CD4-positive, alpha-beta T cell (primary cell): ENCODE measurements at regions of chr1 and their contacts with region 1.

Region 1: GRCh38 chr1:84506002-84506728 is at the starts of genes GNG5 and SPATA1:
- DNase-seq: peak; percentile 94 to 99 (median 97)
- ATAC-seq: peak; percentile 92
- H3K4me3 ChIP-seq: peak within 1 kb of the TSS; percentile 95
- H3K4me3 Mint-ChIP-seq: peak within 1 kb of the TSS; percentile 96
- H3K27ac ChIP-seq: peak within 1 kb of the TSS; percentile 75 to 91
- H3K27ac Mint-ChIP-seq: peak within 1 kb of the TSS; percentile 88
- H3K4me1 ChIP-seq: peaks cover 21% of the 10 kb centered on the region
- H3K4me1 Mint-ChIP-seq: peaks cover 62% of the 10 kb centered on the region
- H3K27me3 ChIP-seq: no peaks in the 10 kb centered on the region
- H3K27me3 Mint-ChIP-seq: no peaks in the 10 kb centered on the region
- CTCF ChIP-seq: no peak
- total RNA-seq, gene GNG5: 23.6 to 24.6 TPM
- total RNA-seq, gene SPATA1: 0.11 to 0.61 TPM

Region 2: GRCh38 chr1:84077476-84078107 is 428.6 kb before region 1 on chr1:
- CTCF ChIA-PET with region 1: no interaction called
- POLR2A ChIA-PET with region 1: no interaction called
- intact Hi-C with region 1: loop called in 1 of 2 experiments (anchors 2 kb)
- DNase-seq: peak; percentile 32 to 86 (median 60)
- ATAC-seq: peak; percentile 88
- H3K4me3 ChIP-seq: peak overlapping the region; percentile 74
- H3K4me3 Mint-ChIP-seq: peak overlapping the region; percentile 92
- H3K27ac ChIP-seq: no peak overlapping the region
- H3K27ac Mint-ChIP-seq: peak overlapping the region; percentile 63
- H3K4me1 ChIP-seq: peaks cover 11% of the 10 kb centered on the region
- H3K4me1 Mint-ChIP-seq: peaks cover 16% of the 10 kb centered on the region
- H3K27me3 ChIP-seq: no peaks in the 10 kb centered on the region
- H3K27me3 Mint-ChIP-seq: no peaks in the 10 kb centered on the region
- CTCF ChIP-seq: no peak

Region 3: DNA sequence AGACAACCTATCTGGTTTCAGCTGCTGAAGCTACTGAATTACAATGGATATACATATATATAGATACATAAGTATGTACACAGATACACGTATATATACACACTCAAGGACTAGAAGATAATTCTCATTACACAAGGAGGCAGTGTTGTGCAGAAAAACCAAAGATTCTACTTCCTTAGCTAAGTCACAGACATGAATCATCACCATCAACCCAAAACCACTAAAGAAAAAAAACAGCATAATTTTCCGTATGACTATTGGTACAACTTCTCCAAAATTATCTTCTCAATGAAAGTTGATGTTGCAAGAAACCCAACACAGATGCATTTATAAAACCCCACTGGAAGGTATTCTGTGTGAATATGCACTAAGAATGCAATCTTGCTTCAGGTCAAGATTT is 63.9 kb before region 1 on chr1:
- CTCF ChIA-PET with region 1: interaction called, 8 read pairs
- POLR2A ChIA-PET with region 1: interaction called, 7 read pairs
- intact Hi-C with region 1: loop called (anchors 2 to 5 kb)
- DNase-seq: peak in 4 of 14 experiments; percentile 7 to 89 (median 86)
- ATAC-seq: peak; percentile 98
- H3K4me3 ChIP-seq: no peak overlapping the region
- H3K4me3 Mint-ChIP-seq: peak overlapping the region; percentile 5
- H3K27ac ChIP-seq: no peak overlapping the region
- H3K27ac Mint-ChIP-seq: peak overlapping the region; percentile 1
- H3K4me1 ChIP-seq: peaks cover 17% of the 10 kb centered on the region
- H3K4me1 Mint-ChIP-seq: peaks cover 11% of the 10 kb centered on the region
- H3K27me3 ChIP-seq: no peaks in the 10 kb centered on the region
- H3K27me3 Mint-ChIP-seq: peaks cover 15% of the 10 kb centered on the region
- CTCF ChIP-seq: peak; percentile 69

Region 4: GRCh38 chr1:84478876-84479868 is 27.0 kb before region 1 on chr1 and contains the start of gene RPF1:
- CTCF ChIA-PET with region 1: interaction called, 7 read pairs
- POLR2A ChIA-PET with region 1: interaction called, 61 read pairs
- intact Hi-C with region 1: loop called (anchors 1 to 2 kb)
- DNase-seq: peak; percentile 58 to 91 (median 74)
- ATAC-seq: peak; percentile 93
- H3K4me3 ChIP-seq: peak within 1 kb of the TSS; percentile 84
- H3K4me3 Mint-ChIP-seq: peak within 1 kb of the TSS; percentile 97
- H3K27ac ChIP-seq: peak within 1 kb of the TSS; percentile 82 to 85
- H3K27ac Mint-ChIP-seq: peak within 1 kb of the TSS; percentile 95
- H3K4me1 ChIP-seq: peaks cover 13% of the 10 kb centered on the region
- H3K4me1 Mint-ChIP-seq: peaks cover 53% of the 10 kb centered on the region
- H3K27me3 ChIP-seq: peaks cover 3 to 12% of the 10 kb centered on the region in 2 experiments
- H3K27me3 Mint-ChIP-seq: peaks cover 33% of the 10 kb centered on the region
- CTCF ChIP-seq: no peak
- total RNA-seq, gene RPF1: 67.6 to 69.4 TPM

Region 5: DNA sequence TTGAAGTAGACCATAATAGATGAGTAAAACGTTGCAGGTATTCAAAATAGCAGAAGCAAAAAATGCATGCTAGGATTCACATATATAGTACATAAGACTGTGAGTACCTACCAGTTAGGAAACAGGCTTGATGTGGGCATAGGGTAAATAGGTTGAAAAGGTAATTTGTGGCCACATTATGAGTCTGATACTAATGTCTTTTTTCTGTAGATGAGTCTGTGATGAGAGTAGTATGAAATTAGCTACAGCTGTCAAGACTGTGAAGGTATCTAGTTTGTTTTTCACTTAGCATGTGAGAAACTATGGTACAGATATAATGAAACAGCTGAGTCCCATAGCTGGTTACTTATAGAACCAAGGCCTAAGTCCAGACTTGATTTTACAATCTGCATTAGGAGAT is 12.4 kb before region 1 on chr1:
- CTCF ChIA-PET with region 1: no interaction called
- POLR2A ChIA-PET with region 1: interaction called, 14 read pairs
- intact Hi-C with region 1: no loop called
- DNase-seq: no peak
- ATAC-seq: no peak
- H3K4me3 ChIP-seq: no peak overlapping the region
- H3K4me3 Mint-ChIP-seq: no peak overlapping the region
- H3K27ac ChIP-seq: no peak overlapping the region
- H3K27ac Mint-ChIP-seq: peak overlapping the region; percentile 31
- H3K4me1 ChIP-seq: no peaks in the 10 kb centered on the region
- H3K4me1 Mint-ChIP-seq: peaks cover 25% of the 10 kb centered on the region
- H3K27me3 ChIP-seq: no peaks in the 10 kb centered on the region
- H3K27me3 Mint-ChIP-seq: no peaks in the 10 kb centered on the region
- CTCF ChIP-seq: no peak

Region 6: DNA sequence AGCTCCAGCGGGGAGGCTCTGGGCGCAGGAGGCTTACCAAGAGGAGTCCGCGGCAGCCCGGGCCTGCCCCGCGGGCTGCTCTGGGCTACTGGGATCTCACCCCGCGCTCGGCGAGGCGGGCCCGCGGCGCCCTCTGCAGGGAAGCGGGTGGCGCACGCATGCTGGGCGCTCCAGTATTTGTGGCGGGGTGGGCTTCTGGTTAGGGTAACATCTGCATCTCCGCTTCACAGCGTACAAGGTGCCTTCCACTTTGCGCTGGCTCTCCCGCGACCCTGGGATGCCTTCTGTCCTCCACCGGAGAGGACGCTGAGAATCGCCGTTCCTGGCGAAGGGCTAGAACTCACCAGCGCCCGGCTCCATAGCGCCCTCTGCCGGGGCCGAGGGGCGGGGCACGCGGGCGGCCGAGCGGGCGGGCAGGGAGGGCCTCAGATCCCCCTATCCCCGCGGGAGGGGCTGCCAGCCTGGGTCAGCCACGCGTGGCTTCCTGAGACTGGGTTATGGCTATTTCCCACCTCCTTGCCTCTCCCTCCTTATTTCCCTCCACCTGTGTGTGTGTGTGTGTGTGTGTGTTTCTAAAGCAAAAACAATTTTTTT is 114.7 kb after region 1 on chr1:
- CTCF ChIA-PET with region 1: interaction called, 4 read pairs
- POLR2A ChIA-PET with region 1: interaction called, 3 read pairs
- intact Hi-C with region 1: loop called in 1 of 2 experiments (anchors 5 kb)
- DNase-seq: peak; percentile 50 to 88 (median 74)
- ATAC-seq: peak; percentile 92
- H3K4me3 ChIP-seq: peak overlapping the region; percentile 64
- H3K4me3 Mint-ChIP-seq: peak overlapping the region; percentile 95
- H3K27ac ChIP-seq: no peak overlapping the region
- H3K27ac Mint-ChIP-seq: no peak overlapping the region
- H3K4me1 ChIP-seq: peaks cover 8% of the 10 kb centered on the region
- H3K4me1 Mint-ChIP-seq: peaks cover 12% of the 10 kb centered on the region
- H3K27me3 ChIP-seq: no peaks in the 10 kb centered on the region
- H3K27me3 Mint-ChIP-seq: no peaks in the 10 kb centered on the region
- CTCF ChIP-seq: peak; percentile 100

Region 7: DNA sequence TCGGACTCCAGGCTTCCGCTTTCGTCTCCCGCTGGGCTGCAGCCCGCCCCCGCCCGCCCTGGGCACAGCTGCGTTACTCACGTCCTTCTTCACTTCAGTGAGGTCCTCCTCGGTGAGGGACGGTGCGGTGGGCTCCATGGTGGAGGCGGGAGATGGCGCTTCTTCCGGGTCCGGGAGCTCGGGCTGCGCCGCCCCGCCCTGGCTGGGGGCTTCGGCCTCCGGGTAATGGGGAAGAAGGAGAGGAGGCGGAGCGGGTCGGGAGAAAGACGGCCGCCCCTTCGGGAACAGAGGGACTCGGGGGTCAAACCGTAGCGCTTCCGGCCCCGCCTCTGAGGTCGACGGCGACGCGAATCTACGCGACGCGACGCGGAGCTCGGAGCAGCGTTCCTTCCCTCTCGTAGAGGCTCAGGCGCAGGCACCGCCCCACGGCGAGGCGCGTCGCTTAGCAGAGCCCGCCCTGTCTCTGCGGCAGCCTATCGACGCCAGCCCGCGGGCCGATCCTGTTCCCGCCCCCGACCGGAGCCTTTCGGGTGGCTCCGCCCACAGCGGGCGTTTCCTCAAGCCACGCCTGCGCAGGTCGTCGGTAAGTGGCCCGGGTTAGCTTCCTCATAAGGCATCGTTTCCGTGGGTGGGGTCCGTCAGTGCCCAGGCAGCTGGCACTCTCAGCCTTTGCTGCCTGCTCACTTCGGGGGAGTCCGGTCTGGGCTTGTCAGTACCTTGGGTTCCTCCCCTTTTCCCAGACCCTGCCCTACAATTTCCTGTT is 770.2 kb after region 1 on chr1 and contains the start of gene BCL10:
- CTCF ChIA-PET with region 1: no interaction called
- POLR2A ChIA-PET with region 1: interaction called, 3 read pairs
- intact Hi-C with region 1: loop called in 1 of 2 experiments (anchors 10 kb)
- DNase-seq: peak; percentile 93 to 99 (median 96)
- ATAC-seq: peak; percentile 95
- H3K4me3 ChIP-seq: peak within 1 kb of the TSS; percentile 94
- H3K4me3 Mint-ChIP-seq: peak within 1 kb of the TSS; percentile 92
- H3K27ac ChIP-seq: peak within 1 kb of the TSS; percentile 90 to 99
- H3K27ac Mint-ChIP-seq: peak within 1 kb of the TSS; percentile 95
- H3K4me1 ChIP-seq: peaks cover 28% of the 10 kb centered on the region
- H3K4me1 Mint-ChIP-seq: peaks cover 57% of the 10 kb centered on the region
- H3K27me3 ChIP-seq: no peaks in the 10 kb centered on the region
- H3K27me3 Mint-ChIP-seq: no peaks in the 10 kb centered on the region
- CTCF ChIP-seq: no peak
- total RNA-seq, gene BCL10: 50.0 to 52.0 TPM